Activated B cell treated with CpG ODN at 0.5 μM for 24 hours (primary cell): ENCODE measurements at regions of chr3 and their contacts with region 1.

Region 1: DNA sequence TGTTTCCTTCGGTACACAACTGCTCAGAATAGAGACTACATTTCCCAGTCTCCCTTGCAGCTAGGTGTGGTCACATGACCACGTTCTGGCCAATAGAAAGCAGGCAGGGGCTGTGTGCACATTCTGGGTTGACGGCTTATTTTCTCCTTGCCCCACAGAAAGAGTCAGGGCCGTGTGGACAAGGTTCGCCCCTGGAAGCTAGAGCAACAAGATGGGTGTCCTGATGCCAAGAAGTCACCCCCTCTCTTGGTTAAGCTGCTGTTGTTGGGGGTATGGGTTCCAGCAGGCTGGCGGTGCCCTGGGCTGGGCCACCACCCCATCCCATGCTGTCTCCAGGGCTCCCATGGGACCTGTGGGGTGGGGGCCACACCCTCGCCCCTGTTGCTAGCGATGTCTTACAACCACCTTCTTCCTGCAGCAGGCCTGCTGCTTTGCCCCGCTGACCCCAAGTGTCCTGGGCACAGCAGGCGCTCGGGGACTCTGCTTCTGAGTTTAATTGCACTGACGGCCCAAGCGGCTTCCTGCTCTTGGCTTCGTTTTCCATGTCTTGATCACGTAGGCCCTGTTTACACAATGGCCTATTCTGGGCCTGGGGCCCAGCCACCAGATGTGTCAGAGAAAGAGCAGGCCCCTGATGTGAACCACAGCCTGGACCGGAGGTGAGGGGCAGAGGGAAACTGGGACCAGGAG is 24.9 kb downstream of the ABTB1 start:
- DNase-seq: peak; percentile 42
- ATAC-seq: peak; percentile 83
- H3K4me3 Mint-ChIP-seq: peak overlapping the region; percentile 70
- H3K27ac Mint-ChIP-seq: peak overlapping the region; percentile 57
- H3K4me1 Mint-ChIP-seq: peaks cover 24% of the 10 kb centered on the region
- H3K27me3 Mint-ChIP-seq: peaks cover 2% of the 10 kb centered on the region
- CTCF ChIP-seq: no peak

Region 2: DNA sequence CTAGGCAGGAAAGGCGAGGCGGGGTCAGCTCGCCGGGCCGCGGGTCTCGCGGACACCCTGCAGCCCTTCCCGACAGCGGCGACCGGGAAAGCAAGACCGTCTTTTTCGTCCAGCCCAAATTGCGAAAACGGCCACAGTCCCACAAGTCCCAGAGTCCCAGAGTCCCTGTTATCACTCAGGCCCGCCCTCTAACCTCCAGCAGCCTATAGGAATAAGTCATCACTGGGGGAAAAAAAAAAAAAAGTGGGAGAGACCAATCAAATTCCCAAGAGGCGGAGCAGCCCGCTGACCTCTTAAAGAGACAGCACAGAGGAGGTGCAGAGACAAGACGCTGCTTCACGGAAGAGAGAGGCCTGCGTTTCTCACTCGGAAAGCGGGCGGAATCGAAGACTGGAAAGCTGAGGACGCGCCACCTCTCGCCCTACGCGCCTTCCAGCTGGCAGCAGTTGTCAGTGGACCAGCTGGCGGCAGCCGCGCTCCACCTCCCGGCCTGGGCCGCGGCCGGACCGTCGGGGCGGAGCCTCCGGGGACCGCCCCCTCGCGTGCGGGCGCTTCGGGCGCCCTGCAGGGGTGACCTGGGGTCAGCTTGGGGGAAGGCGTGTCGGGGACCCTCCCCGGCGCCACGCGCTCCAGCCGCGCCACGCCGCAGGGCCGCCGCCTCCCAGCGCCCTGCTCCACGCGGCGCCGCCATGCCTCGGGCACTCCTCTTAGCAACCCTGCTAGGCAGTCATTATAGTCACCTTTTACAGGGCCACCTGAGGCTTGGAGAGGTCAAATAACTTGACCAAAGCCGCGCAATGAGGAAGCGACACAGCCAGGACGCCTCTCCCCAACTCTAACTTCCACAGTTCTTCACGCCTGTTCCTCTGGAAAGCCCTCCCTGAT is 106.9 kb before region 1 on chr3 and contains the start of gene TPRA1:
- CTCF ChIA-PET with region 1: interaction called, 5 read pairs
- POLR2A ChIA-PET with region 1: no interaction called
- intact Hi-C with region 1: loop called (anchors 2 kb)
- DNase-seq: peak; percentile 79
- ATAC-seq: peak; percentile 82
- H3K4me3 Mint-ChIP-seq: peak within 1 kb of the TSS; percentile 90
- H3K27ac Mint-ChIP-seq: peak within 1 kb of the TSS; percentile 85
- H3K4me1 Mint-ChIP-seq: peaks cover 28% of the 10 kb centered on the region
- H3K27me3 Mint-ChIP-seq: no peaks in the 10 kb centered on the region
- CTCF ChIP-seq: no peak
- total RNA-seq, gene TPRA1: 17.5 and 18.3 TPM in 2 replicates

Region 3: GRCh38 chr3:127735767-127736704 is 38.3 kb after region 1 on chr3:
- CTCF ChIA-PET with region 1: interaction called, 10 read pairs
- POLR2A ChIA-PET with region 1: interaction called, 3 read pairs
- intact Hi-C with region 1: loop called (anchors 1 kb)
- DNase-seq: no peak
- ATAC-seq: peak; percentile 91
- H3K4me3 Mint-ChIP-seq: peak overlapping the region; percentile 77
- H3K27ac Mint-ChIP-seq: peak overlapping the region; percentile 93
- H3K4me1 Mint-ChIP-seq: peaks cover 46% of the 10 kb centered on the region
- H3K27me3 Mint-ChIP-seq: no peaks in the 10 kb centered on the region
- CTCF ChIP-seq: no peak

Region 4: DNA sequence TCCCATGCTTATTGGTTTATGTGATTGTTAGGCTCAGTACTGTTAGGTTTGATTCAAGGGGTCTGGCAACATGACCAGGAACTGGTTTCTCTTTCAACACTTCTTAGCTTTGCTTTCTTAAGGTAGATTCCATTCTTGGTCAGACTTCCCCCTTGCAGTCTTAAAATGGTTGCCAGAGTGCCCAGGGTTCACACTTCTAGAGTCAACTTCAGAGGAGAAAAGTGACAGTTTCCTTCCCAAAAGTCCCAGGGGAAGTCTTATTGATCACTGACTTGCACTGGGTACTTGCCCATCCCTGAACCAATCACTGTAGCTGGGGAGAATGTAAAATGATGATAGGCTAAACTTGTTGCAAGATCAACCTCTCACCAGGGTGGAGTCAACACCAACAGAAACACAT is 110.5 kb after region 1 on chr3:
- CTCF ChIA-PET with region 1: no interaction called
- POLR2A ChIA-PET with region 1: no interaction called
- intact Hi-C with region 1: no loop called
- DNase-seq: no peak
- ATAC-seq: no peak
- H3K4me3 Mint-ChIP-seq: no peak overlapping the region
- H3K27ac Mint-ChIP-seq: no peak overlapping the region
- H3K4me1 Mint-ChIP-seq: peaks cover 5% of the 10 kb centered on the region
- H3K27me3 Mint-ChIP-seq: no peaks in the 10 kb centered on the region
- CTCF ChIP-seq: no peak

Region 5: GRCh38 chr3:127831723-127832172 is 134.1 kb after region 1 on chr3:
- CTCF ChIA-PET with region 1: interaction called, 5 read pairs
- POLR2A ChIA-PET with region 1: no interaction called
- intact Hi-C with region 1: loop called (anchors 2 kb)
- DNase-seq: peak; percentile 32
- ATAC-seq: no peak
- H3K4me3 Mint-ChIP-seq: no peak overlapping the region
- H3K27ac Mint-ChIP-seq: no peak overlapping the region
- H3K4me1 Mint-ChIP-seq: peaks cover 40% of the 10 kb centered on the region
- H3K27me3 Mint-ChIP-seq: no peaks in the 10 kb centered on the region
- CTCF ChIP-seq: no peak

Region 6: GRCh38 chr3:127959846-127960245 is 262.1 kb after region 1 on chr3:
- CTCF ChIA-PET with region 1: interaction called, 4 read pairs
- POLR2A ChIA-PET with region 1: no interaction called
- intact Hi-C with region 1: loop called (anchors 1 kb)
- DNase-seq: no peak
- ATAC-seq: no peak
- H3K4me3 Mint-ChIP-seq: no peak overlapping the region
- H3K27ac Mint-ChIP-seq: no peak overlapping the region
- H3K4me1 Mint-ChIP-seq: no peaks in the 10 kb centered on the region
- H3K27me3 Mint-ChIP-seq: no peaks in the 10 kb centered on the region
- CTCF ChIP-seq: no peak